CD4-positive, alpha-beta T cell (primary cell): ENCODE measurements at regions of chr6 and their contacts with region 1.

Region 1: DNA sequence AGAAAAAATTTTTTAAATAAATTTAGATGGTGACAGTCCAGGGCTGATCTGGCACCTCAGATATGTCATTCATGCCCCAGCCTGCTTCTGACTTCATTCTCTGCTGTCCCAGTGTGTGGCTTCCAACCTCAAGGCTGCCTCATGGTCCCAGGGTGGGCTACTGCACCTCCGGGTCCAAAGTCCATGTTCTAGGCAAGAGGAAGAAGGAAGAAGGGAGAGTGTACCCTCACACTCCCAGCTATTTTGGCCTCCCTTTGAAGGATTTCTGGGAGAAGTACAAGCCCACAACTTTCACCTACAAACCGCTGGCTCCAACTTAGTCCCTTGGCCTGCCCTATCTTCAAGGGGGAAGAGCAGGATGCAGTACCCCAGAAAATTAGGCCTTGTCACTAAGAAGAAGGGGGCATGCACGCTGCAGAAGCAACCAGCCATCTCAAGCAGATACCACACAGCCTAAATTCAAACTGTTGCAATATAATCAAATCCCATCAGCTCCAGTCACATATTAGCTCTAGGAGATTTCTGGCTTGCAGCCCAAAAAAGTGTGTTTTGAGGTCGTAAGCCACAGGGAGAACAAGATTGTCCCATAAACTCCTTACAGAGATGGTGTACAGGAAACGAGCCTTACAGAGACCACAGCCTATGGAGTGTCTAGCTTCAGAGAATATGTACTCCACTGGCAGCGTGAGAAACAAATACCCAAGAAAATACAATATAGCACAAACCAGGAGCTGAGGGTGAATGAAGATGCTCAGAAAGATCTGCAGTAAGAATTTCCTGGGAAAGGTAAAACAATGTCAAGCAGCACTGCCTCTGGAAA is 906 bp upstream of the BTN3A2 start:
- DNase-seq: peak in 5 of 14 experiments; percentile 4 to 64 (median 47)
- ATAC-seq: peak; percentile 21
- H3K4me3 ChIP-seq: peak overlapping the region; percentile 91
- H3K4me3 Mint-ChIP-seq: no peak overlapping the region
- H3K27ac ChIP-seq: peak overlapping the region; percentile 93 to 94
- H3K27ac Mint-ChIP-seq: no peak overlapping the region
- H3K4me1 ChIP-seq: peaks cover 40% of the 10 kb centered on the region
- H3K4me1 Mint-ChIP-seq: peaks cover 53% of the 10 kb centered on the region
- H3K27me3 ChIP-seq: no peaks in the 10 kb centered on the region
- H3K27me3 Mint-ChIP-seq: no peaks in the 10 kb centered on the region
- CTCF ChIP-seq: no peak

Region 2: GRCh38 chr6:26439657-26440056 is 75.6 kb after region 1 on chr6:
- CTCF ChIA-PET with region 1: no interaction called
- POLR2A ChIA-PET with region 1: interaction called, 4 read pairs
- intact Hi-C with region 1: loop called in 1 of 2 experiments (anchors 2 kb)
- DNase-seq: peak in 1 of 14 experiments; percentile 50
- ATAC-seq: no peak
- H3K4me3 ChIP-seq: peak overlapping the region; percentile 89
- H3K4me3 Mint-ChIP-seq: peak overlapping the region; percentile 93
- H3K27ac ChIP-seq: peak overlapping the region; percentile 86 to 95
- H3K27ac Mint-ChIP-seq: peak overlapping the region; percentile 99
- H3K4me1 ChIP-seq: peaks cover 28% of the 10 kb centered on the region
- H3K4me1 Mint-ChIP-seq: peaks cover 54% of the 10 kb centered on the region
- H3K27me3 ChIP-seq: no peaks in the 10 kb centered on the region
- H3K27me3 Mint-ChIP-seq: no peaks in the 10 kb centered on the region
- CTCF ChIP-seq: no peak